ENCODE measurements at regions of chr12 and their contacts with region 1.

Region 1: DNA sequence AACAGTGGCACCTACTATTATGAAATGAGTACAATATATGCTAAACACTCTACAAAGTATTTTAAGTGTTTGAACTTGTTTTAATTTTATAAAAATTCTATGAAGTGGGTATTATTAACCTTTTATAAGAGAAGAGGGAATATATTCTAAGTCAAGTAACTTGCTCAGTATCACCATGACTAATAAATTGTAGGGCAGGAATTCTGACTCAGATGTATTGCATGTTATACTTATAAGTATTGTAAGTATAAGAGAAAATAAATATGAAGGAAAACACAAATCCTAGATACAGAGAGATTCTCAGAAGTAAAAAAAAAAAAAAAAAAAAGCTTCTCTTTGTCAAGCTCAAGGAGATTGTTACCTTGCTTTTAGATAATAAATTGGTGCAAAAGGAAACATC is 893.2 kb downstream of the SLC16A7 start:
- DNase-seq: no peak
- H3K4me3 ChIP-seq: no peak overlapping the region
- H3K27ac ChIP-seq: no peak overlapping the region
- H3K4me1 ChIP-seq: no peaks in the 10 kb centered on the region
- H3K27me3 ChIP-seq: no peaks in the 10 kb centered on the region
- CTCF ChIP-seq: no peak

Region 2: GRCh38 chr12:60106214-60106613 is 382.9 kb before region 1 on chr12:
- CTCF ChIA-PET with region 1: no interaction called
- POLR2A ChIA-PET with region 1: no interaction called
- intact Hi-C with region 1: loop called (anchors 10 kb)
- DNase-seq: no peak
- H3K4me3 ChIP-seq: no peak overlapping the region
- H3K27ac ChIP-seq: no peak overlapping the region
- H3K4me1 ChIP-seq: no peaks in the 10 kb centered on the region
- H3K27me3 ChIP-seq: no peaks in the 10 kb centered on the region
- CTCF ChIP-seq: no peak; the same call in 1 of the 2 replicates

Region 3: DNA sequence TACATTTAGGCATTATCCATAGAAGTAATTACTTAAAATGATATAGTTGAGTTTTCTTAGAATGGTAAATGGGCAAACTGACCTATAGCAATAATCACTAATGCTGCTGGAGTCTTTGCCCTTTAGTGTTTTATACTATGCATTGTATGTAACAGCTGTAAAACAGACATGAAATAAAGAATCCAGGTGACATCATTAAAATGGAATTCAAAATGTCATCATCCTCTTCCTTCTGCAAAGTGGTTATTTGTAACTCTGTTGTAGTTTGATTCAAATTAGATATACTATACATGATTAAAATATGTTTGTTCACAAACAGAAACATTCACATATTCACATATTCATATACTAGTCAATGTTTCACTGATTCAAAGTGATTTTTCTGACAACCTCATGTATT is 294.4 kb before region 1 on chr12:
- CTCF ChIA-PET with region 1: no interaction called
- POLR2A ChIA-PET with region 1: no interaction called
- intact Hi-C with region 1: no loop called
- DNase-seq: no peak
- H3K4me3 ChIP-seq: no peak overlapping the region
- H3K27ac ChIP-seq: no peak overlapping the region
- H3K4me1 ChIP-seq: no peaks in the 10 kb centered on the region
- H3K27me3 ChIP-seq: no peaks in the 10 kb centered on the region
- CTCF ChIP-seq: no peak

Region 4: DNA sequence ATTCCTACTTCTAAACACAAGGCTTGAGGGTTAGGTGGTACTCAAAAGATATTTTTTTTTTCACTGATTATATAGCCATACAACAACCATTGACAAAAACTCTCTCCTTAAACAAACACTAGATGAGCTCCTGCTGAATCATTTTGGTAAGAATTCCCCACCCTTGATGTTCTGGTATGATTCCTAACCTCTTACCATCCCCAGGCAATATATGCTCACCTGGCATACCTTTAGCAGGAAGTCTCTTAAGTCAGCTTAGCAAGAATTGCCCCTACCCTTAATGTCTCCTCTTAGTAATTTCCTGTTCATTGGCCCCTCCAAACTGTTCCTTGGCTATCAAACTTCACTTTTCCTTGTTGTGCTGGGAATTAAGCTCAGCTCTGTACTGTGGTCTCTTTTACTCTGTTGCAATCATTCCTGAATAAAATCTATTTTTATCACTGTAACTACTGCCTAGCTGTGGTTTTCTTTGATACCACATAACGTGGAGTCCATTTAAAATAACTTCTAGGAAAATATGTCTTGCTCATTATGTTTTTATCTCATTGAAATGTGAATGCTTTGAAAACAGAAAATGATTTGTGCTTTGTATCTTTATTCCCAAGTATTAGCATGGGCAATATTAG is 180.6 kb before region 1 on chr12:
- CTCF ChIA-PET with region 1: no interaction called
- POLR2A ChIA-PET with region 1: no interaction called
- intact Hi-C with region 1: no loop called
- DNase-seq: no peak
- H3K4me3 ChIP-seq: no peak overlapping the region
- H3K27ac ChIP-seq: no peak overlapping the region
- H3K4me1 ChIP-seq: no peaks in the 10 kb centered on the region
- H3K27me3 ChIP-seq: no peaks in the 10 kb centered on the region
- CTCF ChIP-seq: no peak

Measured in A673 (cell line).